Activated naive CD4-positive, alpha-beta T cell treated with anti-CD3 and anti-CD28 coated beads for 36 hours (primary cell): ENCODE measurements at regions of chr5 and their contacts with region 1.

Region 1: GRCh38 chr5:132526290-132526973 is 16.9 kb downstream of the IL5 start:
- DNase-seq: peak; percentile 52
- H3K4me3 Mint-ChIP-seq: no peak overlapping the region
- H3K27ac Mint-ChIP-seq: no peak overlapping the region
- H3K4me1 Mint-ChIP-seq: peaks cover 29% of the 10 kb centered on the region
- H3K27me3 Mint-ChIP-seq: peaks cover 4% of the 10 kb centered on the region

Region 2: GRCh38 chr5:131846536-131846935 is 679.9 kb before region 1 on chr5:
- CTCF ChIA-PET with region 1: no interaction called
- intact Hi-C with region 1: no loop called
- DNase-seq: no peak
- H3K4me3 Mint-ChIP-seq: no peak overlapping the region
- H3K27ac Mint-ChIP-seq: no peak overlapping the region
- H3K4me1 Mint-ChIP-seq: no peaks in the 10 kb centered on the region
- H3K27me3 Mint-ChIP-seq: no peaks in the 10 kb centered on the region

Region 3: GRCh38 chr5:132576123-132576522 is 49.7 kb after region 1 on chr5:
- CTCF ChIA-PET with region 1: interaction called, 6 read pairs
- intact Hi-C with region 1: loop called (anchors 5 kb)
- DNase-seq: no peak
- H3K4me3 Mint-ChIP-seq: no peak overlapping the region
- H3K27ac Mint-ChIP-seq: no peak overlapping the region
- H3K4me1 Mint-ChIP-seq: peaks cover 30% of the 10 kb centered on the region
- H3K27me3 Mint-ChIP-seq: no peaks in the 10 kb centered on the region

Region 4: GRCh38 chr5:132639706-132640130 is 113.3 kb after region 1 on chr5:
- CTCF ChIA-PET with region 1: interaction called, 10 read pairs
- intact Hi-C with region 1: loop called (anchors 1 kb)
- DNase-seq: no peak
- H3K4me3 Mint-ChIP-seq: no peak overlapping the region
- H3K27ac Mint-ChIP-seq: no peak overlapping the region
- H3K4me1 Mint-ChIP-seq: peaks cover 43% of the 10 kb centered on the region
- H3K27me3 Mint-ChIP-seq: no peaks in the 10 kb centered on the region

Region 5: GRCh38 chr5:132736853-132737833 is 210.7 kb after region 1 on chr5 and contains the start of gene KIF3A:
- CTCF ChIA-PET with region 1: interaction called, 4 read pairs
- intact Hi-C with region 1: loop called (anchors 5 kb)
- DNase-seq: peak; percentile 99
- H3K4me3 Mint-ChIP-seq: peak within 1 kb of the TSS; percentile 84
- H3K27ac Mint-ChIP-seq: peak within 1 kb of the TSS; percentile 50
- H3K4me1 Mint-ChIP-seq: peaks cover 27% of the 10 kb centered on the region
- H3K27me3 Mint-ChIP-seq: no peaks in the 10 kb centered on the region
- total RNA-seq, gene KIF3A: 5.0 to 6.1 TPM

Region 6: DNA sequence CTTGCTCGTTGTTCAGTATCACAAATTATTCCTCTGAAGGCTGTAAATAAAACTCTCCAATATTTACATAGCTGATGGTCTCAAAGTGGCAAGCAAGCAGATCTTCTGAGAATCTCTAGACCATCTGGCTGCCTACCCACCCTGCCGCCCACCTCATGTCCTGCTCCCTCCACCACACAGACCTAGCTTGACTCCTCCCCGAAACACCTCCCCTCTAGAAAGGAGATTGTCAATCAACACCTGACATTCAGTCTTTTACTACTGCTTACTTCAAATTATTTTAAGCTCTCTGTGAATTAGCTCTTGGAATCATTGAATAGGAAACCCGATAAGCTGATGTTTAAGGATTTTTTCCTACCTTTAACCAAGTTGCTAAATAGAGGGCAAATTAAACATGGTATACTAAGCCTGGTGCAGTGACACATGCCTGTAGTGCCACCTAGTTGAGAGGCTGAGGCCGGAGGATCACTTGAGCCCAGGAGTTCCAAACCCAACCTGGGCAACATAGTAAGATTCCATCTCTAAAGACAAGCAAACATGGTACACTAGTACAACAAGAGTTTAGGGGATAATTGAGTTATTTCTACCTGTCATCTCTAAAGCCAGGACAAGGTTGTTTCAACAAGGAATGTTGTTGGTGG is 275.7 kb after region 1 on chr5:
- CTCF ChIA-PET with region 1: interaction called, 12 read pairs
- intact Hi-C with region 1: loop called (anchors 1 kb)
- DNase-seq: peak; percentile 44
- H3K4me3 Mint-ChIP-seq: no peak overlapping the region
- H3K27ac Mint-ChIP-seq: no peak overlapping the region
- H3K4me1 Mint-ChIP-seq: no peaks in the 10 kb centered on the region
- H3K27me3 Mint-ChIP-seq: peaks cover 37% of the 10 kb centered on the region

Region 7: DNA sequence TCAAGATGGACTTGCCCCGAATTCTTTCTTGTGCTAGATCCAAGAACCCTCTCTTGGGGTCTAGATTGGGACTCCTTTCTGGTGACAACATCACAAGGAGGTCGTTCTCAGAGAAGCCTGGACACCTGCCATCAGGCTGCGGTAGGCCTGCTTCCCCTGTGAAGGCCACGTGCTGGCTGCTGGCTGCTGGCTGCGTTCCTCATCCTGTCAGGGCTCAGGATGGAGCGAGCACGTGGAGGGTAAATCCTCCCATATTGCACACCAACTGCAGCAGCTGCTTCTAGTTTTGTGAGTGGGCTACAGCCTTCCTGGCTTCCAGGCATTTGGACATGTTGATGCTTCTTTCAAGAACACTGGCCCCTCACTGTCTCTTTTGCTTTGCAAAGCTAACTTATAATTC is 621.0 kb after region 1 on chr5:
- CTCF ChIA-PET with region 1: no interaction called
- intact Hi-C with region 1: no loop called
- DNase-seq: peak; percentile 19
- H3K4me3 Mint-ChIP-seq: no peak overlapping the region
- H3K27ac Mint-ChIP-seq: no peak overlapping the region
- H3K4me1 Mint-ChIP-seq: peaks cover 16% of the 10 kb centered on the region
- H3K27me3 Mint-ChIP-seq: no peaks in the 10 kb centered on the region